Gastrocnemius medialis (tissue), 4 donors: ENCODE measurements at regions of chr11 and their contacts with region 1.

Region 1: GRCh38 chr11:33742249-33742851 is 6.1 kb upstream of the CD59 start:
- DNase-seq: no peak
- ATAC-seq: peak; percentile 50 to 74
- H3K4me3 ChIP-seq: no peak overlapping the region
- H3K27ac ChIP-seq: peak overlapping the region in 3 of 4 donors; percentile 1 to 57 (median 39)
- H3K4me1 ChIP-seq: peaks cover 10 to 13% of the 10 kb centered on the region in 2 donors
- H3K27me3 ChIP-seq: no peaks in the 10 kb centered on the region
- CTCF ChIP-seq: peak in 4 of 5 experiments; percentile 47 to 72 (median 56)
- POLR2A ChIP-seq: no peak

Region 2: DNA sequence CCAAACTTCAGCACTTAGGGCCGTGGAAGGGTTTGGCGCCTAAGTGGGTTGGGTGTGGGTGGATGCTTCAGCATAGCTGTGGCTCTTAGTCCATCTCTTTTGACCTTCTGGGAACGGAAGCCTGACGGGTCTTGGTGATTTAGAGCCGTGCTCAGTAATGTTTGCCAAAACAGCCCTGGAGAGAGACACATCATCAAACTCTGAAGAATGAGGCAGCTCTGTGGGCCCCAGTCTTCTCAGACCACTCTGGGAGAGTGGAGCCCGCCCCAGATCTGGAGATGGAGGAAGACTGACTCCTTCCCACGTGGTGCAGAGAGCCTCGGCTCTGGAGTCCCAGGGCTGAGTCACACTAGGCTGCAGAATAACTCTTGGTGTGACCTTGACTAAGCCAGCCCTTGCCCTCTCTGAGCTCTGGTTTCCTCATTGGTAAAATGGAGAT is 210.6 kb before region 1 on chr11:
- in situ Hi-C with region 1: loop called in 1 of 4 experiments (anchors 10 kb)
- intact Hi-C with region 1: no loop called
- DNase-seq: peak; percentile 7 to 57
- ATAC-seq: peak; percentile 36 to 80
- H3K4me3 ChIP-seq: no peak overlapping the region
- H3K27ac ChIP-seq: peak overlapping the region in 3 of 4 donors; percentile 47 to 60 (median 47)
- H3K4me1 ChIP-seq: no peaks in the 10 kb centered on the region
- H3K27me3 ChIP-seq: peaks cover 0 to 2% (median 0%) of the 10 kb centered on the region in 3 donors
- CTCF ChIP-seq: no peak
- POLR2A ChIP-seq: no peak

Region 3: GRCh38 chr11:33942954-33943353 is 200.6 kb after region 1 on chr11:
- in situ Hi-C with region 1: no loop called
- intact Hi-C with region 1: no loop called
- DNase-seq: peak in 1 of 2 donors; percentile 22
- ATAC-seq: peak; percentile 46 to 58
- H3K4me3 ChIP-seq: no peak overlapping the region
- H3K27ac ChIP-seq: no peak overlapping the region
- H3K4me1 ChIP-seq: peaks cover 0 to 6% of the 10 kb centered on the region in 2 donors
- H3K27me3 ChIP-seq: no peaks in the 10 kb centered on the region
- CTCF ChIP-seq: no peak
- POLR2A ChIP-seq: no peak